ENCODE measurements at regions of chr18 and their contacts with region 1.

Region 1: GRCh38 chr18:49510393-49511115 is 23.5 kb upstream of the C18orf32 start:
- DNase-seq: no peak
- ATAC-seq: peak; percentile 92
- H3K4me3 ChIP-seq: no peak overlapping the region
- H3K27ac ChIP-seq: no peak overlapping the region
- H3K4me1 ChIP-seq: no peaks in the 10 kb centered on the region
- H3K27me3 ChIP-seq: no peaks in the 10 kb centered on the region
- CTCF ChIP-seq: peak; percentile 86 to 90 (median 87)
- EP300 ChIP-seq: no peak
- POLR2A ChIP-seq: no peak
- RAD21 ChIP-seq: peak; percentile 82

Region 2: GRCh38 chr18:49495480-49495879 is 15.1 kb before region 1 on chr18:
- CTCF ChIA-PET with region 1: interaction called, 13 read pairs
- POLR2A ChIA-PET with region 1: no interaction called
- RAD21 ChIA-PET with region 1: interaction called, 4 read pairs
- SMC1A ChIA-PET with region 1: interaction called, 3 read pairs
- in situ Hi-C with region 1: no loop called
- intact Hi-C with region 1: no loop called
- DNase-seq: no peak
- ATAC-seq: no peak
- H3K4me3 ChIP-seq: no peak overlapping the region
- H3K27ac ChIP-seq: no peak overlapping the region
- H3K4me1 ChIP-seq: no peaks in the 10 kb centered on the region; the same call in 1 of the 2 replicates
- H3K27me3 ChIP-seq: no peaks in the 10 kb centered on the region
- CTCF ChIP-seq: no peak
- EP300 ChIP-seq: no peak
- POLR2A ChIP-seq: no peak
- RAD21 ChIP-seq: no peak

Region 3: GRCh38 chr18:49645841-49646351 is 135.3 kb after region 1 on chr18:
- CTCF ChIA-PET with region 1: no interaction called
- POLR2A ChIA-PET with region 1: no interaction called
- RAD21 ChIA-PET with region 1: no interaction called
- SMC1A ChIA-PET with region 1: no interaction called
- in situ Hi-C with region 1: no loop called
- intact Hi-C with region 1: loop called (anchors 10 kb)
- DNase-seq: no peak
- ATAC-seq: no peak
- H3K4me3 ChIP-seq: no peak overlapping the region
- H3K27ac ChIP-seq: no peak overlapping the region
- H3K4me1 ChIP-seq: no peaks in the 10 kb centered on the region
- H3K27me3 ChIP-seq: peaks cover 0 to 3% of the 10 kb centered on the region in 2 experiments; a peak in 2 of 4 replicates
- CTCF ChIP-seq: no peak
- EP300 ChIP-seq: no peak
- POLR2A ChIP-seq: no peak
- RAD21 ChIP-seq: no peak

Region 4: GRCh38 chr18:49716035-49716434 is 205.5 kb after region 1 on chr18:
- CTCF ChIA-PET with region 1: no interaction called
- POLR2A ChIA-PET with region 1: no interaction called
- RAD21 ChIA-PET with region 1: no interaction called
- SMC1A ChIA-PET with region 1: no interaction called
- in situ Hi-C with region 1: no loop called
- intact Hi-C with region 1: no loop called
- DNase-seq: no peak
- ATAC-seq: no peak
- H3K4me3 ChIP-seq: no peak overlapping the region
- H3K27ac ChIP-seq: no peak overlapping the region
- H3K4me1 ChIP-seq: no peaks in the 10 kb centered on the region
- H3K27me3 ChIP-seq: no peaks in the 10 kb centered on the region
- CTCF ChIP-seq: no peak
- EP300 ChIP-seq: no peak
- POLR2A ChIP-seq: no peak
- RAD21 ChIP-seq: no peak

Region 5: DNA sequence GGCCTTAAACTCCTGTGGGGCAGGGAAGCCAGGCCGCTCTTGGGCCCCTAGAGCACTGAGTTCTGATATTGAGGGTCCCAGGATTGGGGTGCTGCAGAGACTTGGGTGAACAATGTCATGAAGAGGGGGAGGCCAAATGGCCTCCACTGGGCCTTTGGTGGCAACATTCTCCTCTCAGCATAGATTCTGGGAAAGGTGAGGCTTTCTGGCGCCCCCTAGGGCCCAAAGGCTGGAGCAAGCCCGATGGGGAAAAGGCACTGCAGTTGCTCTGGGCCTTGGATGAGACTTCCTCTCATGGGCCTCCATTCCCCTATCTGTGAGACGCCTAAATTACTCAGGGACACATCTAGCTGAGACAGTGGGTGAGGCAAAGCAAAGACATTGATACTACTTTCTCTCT is 218.0 kb after region 1 on chr18:
- CTCF ChIA-PET with region 1: interaction called, 12 read pairs
- POLR2A ChIA-PET with region 1: no interaction called
- RAD21 ChIA-PET with region 1: interaction called, 5 read pairs
- SMC1A ChIA-PET with region 1: interaction called, 3 read pairs
- in situ Hi-C with region 1: no loop called
- intact Hi-C with region 1: loop called (anchors 1 kb)
- DNase-seq: no peak
- ATAC-seq: peak; percentile 77
- H3K4me3 ChIP-seq: no peak overlapping the region
- H3K27ac ChIP-seq: no peak overlapping the region
- H3K4me1 ChIP-seq: peaks cover 5% of the 10 kb centered on the region
- H3K27me3 ChIP-seq: peaks cover 0 to 3% of the 10 kb centered on the region in 2 experiments; a peak in 1 of 4 replicates
- CTCF ChIP-seq: peak; percentile 67 to 80 (median 69)
- EP300 ChIP-seq: no peak
- POLR2A ChIP-seq: no peak
- RAD21 ChIP-seq: peak; percentile 59

Region 6: GRCh38 chr18:49768051-49768391 is 257.5 kb after region 1 on chr18:
- CTCF ChIA-PET with region 1: interaction called, 10 read pairs
- POLR2A ChIA-PET with region 1: no interaction called
- RAD21 ChIA-PET with region 1: interaction called, 3 read pairs
- SMC1A ChIA-PET with region 1: interaction called, 5 read pairs
- in situ Hi-C with region 1: no loop called
- intact Hi-C with region 1: loop called (anchors 1 kb)
- DNase-seq: no peak
- ATAC-seq: peak; percentile 68
- H3K4me3 ChIP-seq: no peak overlapping the region
- H3K27ac ChIP-seq: no peak overlapping the region
- H3K4me1 ChIP-seq: no peaks in the 10 kb centered on the region
- H3K27me3 ChIP-seq: no peaks in the 10 kb centered on the region
- CTCF ChIP-seq: peak; percentile 35 to 54 (median 44); a peak in 4 of 6 replicates
- EP300 ChIP-seq: no peak
- POLR2A ChIP-seq: no peak
- RAD21 ChIP-seq: peak; percentile 39